Aorta (tissue), 5 donors: ENCODE measurements at regions of chr7 and their contacts with region 1.

Region 1: DNA sequence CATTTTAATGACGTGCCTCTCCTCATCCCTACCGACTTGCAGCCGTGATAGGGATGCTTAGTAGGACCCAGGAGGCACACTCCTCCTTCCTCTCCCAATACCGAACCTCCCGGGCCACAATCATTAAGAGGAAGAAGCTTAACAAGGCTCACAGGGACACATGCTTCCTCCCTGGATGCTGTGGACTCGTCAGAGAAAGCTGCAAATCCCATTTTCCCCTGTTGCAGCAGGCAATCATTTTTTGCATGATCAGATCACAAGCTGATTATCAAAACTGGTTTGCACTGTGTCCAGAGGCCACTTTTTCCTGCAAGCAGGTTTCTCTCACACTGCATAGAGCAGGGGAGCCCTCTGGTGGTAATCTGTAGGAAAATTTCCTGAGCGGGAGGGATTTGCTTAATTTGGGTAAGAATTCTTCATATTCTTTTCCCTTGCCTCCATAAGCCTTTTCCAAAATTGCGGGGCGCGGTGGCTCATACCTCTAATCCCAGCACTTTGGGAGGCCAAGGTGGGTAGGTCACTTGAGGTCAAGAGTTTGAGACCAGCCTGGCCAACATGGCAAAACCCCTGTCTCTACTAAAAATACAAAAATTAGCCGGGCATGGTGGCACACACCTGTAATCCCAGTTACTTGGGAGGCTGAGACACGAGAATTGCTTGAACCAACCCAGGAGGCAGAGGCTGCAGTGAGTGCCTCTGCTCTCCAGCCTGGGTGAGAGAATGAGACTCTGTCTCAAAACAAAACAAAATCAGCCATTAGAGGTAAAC is 16.1 kb upstream of the LAMB4 start:
- DNase-seq: peak in 1 of 2 donors; percentile 55
- ATAC-seq: peak; percentile 85
- H3K4me3 ChIP-seq: peak overlapping the region in 1 of 2 donors; percentile 26
- H3K27ac ChIP-seq: no peak overlapping the region
- H3K4me1 ChIP-seq: no peaks in the 10 kb centered on the region
- H3K27me3 ChIP-seq: peaks cover 0 to 2% of the 10 kb centered on the region in 2 donors

Region 2: GRCh38 chr7:107743567-107744344 is 402.5 kb before region 1 on chr7 and contains the start of gene CBLL1:
- intact Hi-C with region 1: loop called in 1 of 2 experiments (anchors 10 kb)
- DNase-seq: peak; percentile 98 to 99
- ATAC-seq: peak; percentile 100
- H3K4me3 ChIP-seq: peak within 1 kb of the TSS; percentile 57 to 81
- H3K27ac ChIP-seq: peak within 1 kb of the TSS; percentile 80 to 87
- H3K4me1 ChIP-seq: peaks cover 2 to 7% of the 10 kb centered on the region in 2 donors
- H3K27me3 ChIP-seq: no peaks in the 10 kb centered on the region
- total RNA-seq, gene CBLL1: 20.4 to 23.4 TPM

Region 3: GRCh38 chr7:107879400-107880035 is 266.7 kb before region 1 on chr7:
- intact Hi-C with region 1: loop called (anchors 5 to 10 kb)
- DNase-seq: no peak
- ATAC-seq: no peak
- H3K4me3 ChIP-seq: no peak overlapping the region
- H3K27ac ChIP-seq: no peak overlapping the region
- H3K4me1 ChIP-seq: no peaks in the 10 kb centered on the region
- H3K27me3 ChIP-seq: no peaks in the 10 kb centered on the region

Region 4: DNA sequence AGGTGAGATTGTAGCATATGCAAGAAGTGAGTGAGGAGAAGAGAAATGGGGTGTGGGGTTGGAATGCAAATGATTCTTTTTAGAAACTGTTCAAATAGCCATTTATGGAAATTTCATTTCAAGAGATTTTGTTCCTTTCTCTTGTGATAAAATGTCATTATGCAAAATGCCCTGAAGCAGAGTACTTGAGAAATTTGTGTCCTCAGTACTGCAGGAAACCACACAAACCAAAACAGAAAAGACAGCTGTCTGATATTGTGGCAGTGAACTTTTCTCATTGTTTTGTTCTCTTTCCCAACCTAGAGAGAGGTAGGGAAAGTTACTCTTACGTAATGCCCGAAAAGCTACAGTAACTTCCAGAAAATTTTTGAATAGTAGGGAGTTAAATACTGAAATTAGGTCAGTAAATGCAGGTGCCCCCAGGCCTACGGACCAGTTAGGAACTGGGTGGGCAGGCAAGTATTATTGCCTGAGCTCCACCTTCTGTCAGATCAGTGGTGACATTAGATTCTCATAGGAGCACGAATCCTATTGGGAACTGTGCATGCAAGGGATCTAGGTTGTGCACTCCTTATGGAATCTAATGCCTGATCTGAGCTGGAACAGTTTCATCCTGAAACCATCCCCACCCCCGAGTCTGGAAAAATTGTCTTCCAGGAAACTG is 221.3 kb before region 1 on chr7:
- intact Hi-C with region 1: loop called in 1 of 2 experiments (anchors 10 kb)
- DNase-seq: no peak
- ATAC-seq: no peak
- H3K4me3 ChIP-seq: no peak overlapping the region
- H3K27ac ChIP-seq: no peak overlapping the region
- H3K4me1 ChIP-seq: no peaks in the 10 kb centered on the region
- H3K27me3 ChIP-seq: no peaks in the 10 kb centered on the region

Region 5: GRCh38 chr7:108016841-108017775 is 129.1 kb before region 1 on chr7:
- intact Hi-C with region 1: loop called in 1 of 2 experiments (anchors 10 kb)
- DNase-seq: no peak
- ATAC-seq: no peak
- H3K4me3 ChIP-seq: no peak overlapping the region
- H3K27ac ChIP-seq: no peak overlapping the region
- H3K4me1 ChIP-seq: no peaks in the 10 kb centered on the region
- H3K27me3 ChIP-seq: no peaks in the 10 kb centered on the region